A673 (cell line): ENCODE measurements at regions of chr6 and their contacts with region 1.

Region 1: DNA sequence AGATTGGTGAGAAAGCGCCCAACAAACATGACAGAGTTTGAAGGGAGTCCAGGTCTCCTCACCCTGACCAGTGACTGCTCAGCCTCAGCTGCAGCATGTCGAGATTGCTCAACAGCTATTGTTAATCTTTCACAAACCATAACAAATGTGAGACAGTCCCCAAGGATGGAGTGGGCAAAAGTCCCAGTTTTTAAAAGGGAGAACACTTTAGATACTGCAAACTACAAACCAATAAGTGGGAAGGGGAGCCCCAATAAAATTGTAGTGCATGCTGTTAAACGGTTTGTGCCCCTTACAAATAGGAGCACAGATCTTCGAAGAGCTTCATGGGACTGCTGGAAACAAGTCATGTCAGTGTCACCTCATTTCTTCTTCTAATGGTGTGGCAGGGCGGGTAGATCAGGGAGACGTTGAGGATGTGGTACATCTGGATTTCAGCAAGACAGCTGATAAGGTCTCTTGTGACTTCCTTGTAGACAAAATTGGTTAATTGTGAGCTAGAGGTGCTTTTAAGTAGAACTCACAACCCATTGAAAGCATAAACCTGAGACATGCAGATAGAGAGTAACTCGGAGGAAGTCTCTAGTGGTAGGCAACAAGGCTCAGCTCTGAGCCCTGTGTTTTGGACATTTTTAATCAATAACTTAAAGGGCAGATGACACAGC is 134.0 kb upstream of the ARMC2 start:
- DNase-seq: peak; percentile 62
- H3K4me3 ChIP-seq: no peak overlapping the region
- H3K27ac ChIP-seq: no peak overlapping the region
- H3K4me1 ChIP-seq: peaks cover 15% of the 10 kb centered on the region
- H3K27me3 ChIP-seq: no peaks in the 10 kb centered on the region
- CTCF ChIP-seq: no peak

Region 2: GRCh38 chr6:107192830-107193229 is 1521.4 kb before region 1 on chr6:
- CTCF ChIA-PET with region 1: no interaction called
- POLR2A ChIA-PET with region 1: no interaction called
- intact Hi-C with region 1: loop called (anchors 10 kb)
- DNase-seq: no peak
- H3K4me3 ChIP-seq: no peak overlapping the region
- H3K27ac ChIP-seq: no peak overlapping the region
- H3K4me1 ChIP-seq: no peaks in the 10 kb centered on the region
- H3K27me3 ChIP-seq: no peaks in the 10 kb centered on the region
- CTCF ChIP-seq: no peak